ENCODE measurements at regions of chr3 and their contacts with region 1.

Region 1: GRCh38 chr3:186044973-186045372 is 63.9 kb downstream of the ETV5 start:
- DNase-seq: peak in 9 of 10 donors; percentile 44 to 84 (median 70)
- H3K4me3 ChIP-seq: peak overlapping the region in 52 of 59 donors; percentile 3 to 60 (median 35)
- H3K27ac ChIP-seq: peak overlapping the region in 56 of 59 donors; percentile 0 to 93 (median 82)
- H3K27me3 ChIP-seq: no peaks in the 10 kb centered on the region
- CTCF ChIP-seq: peak in 30 of 56 donors; percentile 10 to 55 (median 30)

Region 2: DNA sequence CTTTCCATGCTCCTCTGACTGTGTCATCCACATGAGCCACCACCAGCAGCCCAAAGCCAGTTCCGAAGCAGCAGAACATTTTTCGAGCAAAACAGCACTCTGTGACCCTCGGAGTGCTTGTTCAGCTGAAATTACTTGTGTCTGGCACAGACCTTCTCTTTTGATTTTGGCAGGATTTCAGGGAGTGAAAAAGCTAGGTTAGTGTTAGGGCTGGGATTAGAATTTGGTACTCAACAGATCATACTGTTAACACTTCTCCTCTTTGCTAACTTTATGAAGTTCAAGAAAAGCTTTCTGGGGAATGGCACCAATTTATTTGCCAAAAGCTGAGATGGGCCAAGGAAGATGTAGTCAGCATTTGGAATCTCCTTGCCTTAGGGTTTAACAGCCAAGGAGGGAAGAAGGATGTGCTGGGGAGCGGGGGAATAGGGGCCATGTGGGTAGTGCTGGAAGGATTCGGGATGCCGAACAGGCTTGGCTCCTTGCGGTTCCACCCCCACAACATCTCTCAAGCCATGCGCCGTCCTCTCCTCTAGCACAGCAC is 52.1 kb before region 1 on chr3:
- intact Hi-C with region 1: loop called in 1 of 2 experiments (anchors 5 kb)
- DNase-seq: peak in 6 of 10 donors; percentile 22 to 64 (median 57)
- H3K4me3 ChIP-seq: no peak overlapping the region
- H3K27ac ChIP-seq: peak overlapping the region in 22 of 59 donors; percentile 9 to 75 (median 44)
- H3K27me3 ChIP-seq: no peaks in the 10 kb centered on the region
- CTCF ChIP-seq: no peak

Region 3: GRCh38 chr3:186209810-186210752 is 165.1 kb after region 1 on chr3:
- intact Hi-C with region 1: loop called (anchors 2 to 5 kb)
- DNase-seq: peak; percentile 40 to 93 (median 89)
- H3K4me3 ChIP-seq: peak overlapping the region in 29 of 59 donors; percentile 0 to 39 (median 26)
- H3K27ac ChIP-seq: peak overlapping the region; percentile 68 to 96 (median 92)
- H3K27me3 ChIP-seq: no peaks in the 10 kb centered on the region
- CTCF ChIP-seq: peak in 16 of 56 donors; percentile 6 to 59 (median 18)

Region 4: DNA sequence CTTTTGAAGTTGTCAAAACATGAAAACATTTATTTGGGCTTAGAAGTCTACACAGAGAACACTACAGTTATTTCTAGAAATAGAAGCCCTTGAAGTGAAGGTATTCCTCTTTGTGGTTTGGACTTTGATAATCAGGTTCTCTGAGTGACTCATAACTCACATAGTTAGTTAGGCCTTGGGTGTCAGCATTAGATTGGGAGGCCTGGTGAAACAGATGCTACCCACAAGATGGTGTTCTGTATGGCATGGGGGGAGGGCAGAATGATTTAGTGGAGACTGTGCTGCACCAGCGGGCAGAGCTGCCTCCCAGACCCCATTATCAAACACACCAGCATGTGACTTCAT is 172.8 kb after region 1 on chr3:
- intact Hi-C with region 1: loop called in 1 of 2 experiments (anchors 5 kb)
- DNase-seq: no peak
- H3K4me3 ChIP-seq: no peak overlapping the region
- H3K27ac ChIP-seq: peak overlapping the region in 33 of 59 donors; percentile 1 to 70 (median 41)
- H3K27me3 ChIP-seq: no peaks in the 10 kb centered on the region
- CTCF ChIP-seq: no peak